B cell (primary cell): ENCODE measurements at regions of chr7 and their contacts with region 1.

Region 1: GRCh38 chr7:3042861-3043489 is 692 bp downstream of the CARD11 start:
- DNase-seq: peak; percentile 82
- ATAC-seq: peak; percentile 69
- H3K4me3 ChIP-seq: peak overlapping the region; percentile 30 to 90 (median 74)
- H3K4me3 Mint-ChIP-seq: peak overlapping the region; percentile 96
- H3K27ac ChIP-seq: peak overlapping the region; percentile 72 to 94
- H3K27ac Mint-ChIP-seq: peak overlapping the region; percentile 94
- H3K4me1 ChIP-seq: peaks cover 48 to 56% of the 10 kb centered on the region in 2 donors
- H3K4me1 Mint-ChIP-seq: peaks cover 55% of the 10 kb centered on the region
- H3K27me3 ChIP-seq: no peaks in the 10 kb centered on the region
- H3K27me3 Mint-ChIP-seq: no peaks in the 10 kb centered on the region
- CTCF ChIP-seq: no peak

Region 2: DNA sequence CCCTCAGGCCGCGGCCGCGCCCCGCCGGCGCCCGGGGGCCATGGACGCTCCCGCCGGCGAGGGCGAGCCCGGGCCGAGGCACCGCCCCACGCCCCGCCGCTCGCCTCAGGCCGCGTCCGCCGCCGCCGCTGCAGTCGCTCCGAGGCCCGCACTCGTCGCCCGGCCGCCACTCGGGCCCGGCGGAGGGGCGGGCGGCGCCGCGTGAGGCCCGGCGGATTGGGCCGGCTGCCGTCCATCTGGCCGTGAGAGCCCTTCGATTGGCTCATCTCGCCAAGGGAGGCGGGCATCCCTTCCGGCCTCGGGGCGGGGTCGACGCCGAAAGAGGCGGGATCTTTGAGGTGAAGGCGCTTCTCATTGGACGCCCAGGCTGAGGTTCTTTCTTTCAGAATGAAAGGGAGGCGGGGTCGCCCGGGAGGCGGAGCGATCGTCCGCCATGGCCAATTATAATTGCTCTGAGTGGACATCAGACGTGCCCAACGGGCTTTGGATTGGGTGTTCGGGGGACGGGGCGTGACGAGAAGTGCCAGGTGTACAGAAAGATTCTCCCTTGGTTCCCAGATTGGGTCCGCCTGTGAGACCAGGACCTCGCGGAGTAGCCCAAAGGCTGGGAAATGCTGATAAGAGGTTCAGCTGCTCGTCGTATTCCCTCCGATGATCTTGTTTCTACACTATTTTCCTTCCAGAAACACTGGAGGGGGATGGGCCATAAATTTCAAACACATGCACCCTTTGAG is 198.6 kb before region 1 on chr7 and contains the start of gene GNA12:
- CTCF ChIA-PET with region 1: no interaction called
- POLR2A ChIA-PET with region 1: no interaction called
- intact Hi-C with region 1: loop called (anchors 2 kb)
- DNase-seq: peak; percentile 98
- ATAC-seq: peak; percentile 93
- H3K4me3 ChIP-seq: peak within 1 kb of the TSS; percentile 50 to 70 (median 65)
- H3K4me3 Mint-ChIP-seq: peak within 1 kb of the TSS; percentile 95
- H3K27ac ChIP-seq: peak within 1 kb of the TSS in 1 of 2 donors; percentile 53
- H3K27ac Mint-ChIP-seq: peak within 1 kb of the TSS; percentile 80
- H3K4me1 ChIP-seq: peaks cover 34 to 45% of the 10 kb centered on the region in 2 donors
- H3K4me1 Mint-ChIP-seq: peaks cover 51% of the 10 kb centered on the region
- H3K27me3 ChIP-seq: no peaks in the 10 kb centered on the region
- H3K27me3 Mint-ChIP-seq: no peaks in the 10 kb centered on the region
- CTCF ChIP-seq: no peak
- total RNA-seq, gene GNA12: 110 and 114 TPM in 2 replicates

Region 3: GRCh38 chr7:2954433-2954853 is 88.5 kb before region 1 on chr7:
- CTCF ChIA-PET with region 1: interaction called, 5 read pairs
- POLR2A ChIA-PET with region 1: no interaction called
- intact Hi-C with region 1: loop called (anchors 5 kb)
- DNase-seq: no peak
- ATAC-seq: peak; percentile 49
- H3K4me3 ChIP-seq: no peak overlapping the region
- H3K4me3 Mint-ChIP-seq: peak overlapping the region; percentile 26
- H3K27ac ChIP-seq: peak overlapping the region in 1 of 2 donors; percentile 63
- H3K27ac Mint-ChIP-seq: peak overlapping the region; percentile 74
- H3K4me1 ChIP-seq: peaks cover 37% of the 10 kb centered on the region in 2 donors
- H3K4me1 Mint-ChIP-seq: peaks cover 59% of the 10 kb centered on the region
- H3K27me3 ChIP-seq: no peaks in the 10 kb centered on the region
- H3K27me3 Mint-ChIP-seq: no peaks in the 10 kb centered on the region
- CTCF ChIP-seq: no peak

Region 4: GRCh38 chr7:3065724-3066143 is 22.8 kb after region 1 on chr7:
- CTCF ChIA-PET with region 1: interaction called, 11 read pairs
- POLR2A ChIA-PET with region 1: interaction called, 5 read pairs
- intact Hi-C with region 1: loop called (anchors 2 kb)
- DNase-seq: peak; percentile 82
- ATAC-seq: peak; percentile 39
- H3K4me3 ChIP-seq: no peak overlapping the region
- H3K4me3 Mint-ChIP-seq: peak overlapping the region; percentile 47
- H3K27ac ChIP-seq: peak overlapping the region in 1 of 2 donors; percentile 15
- H3K27ac Mint-ChIP-seq: peak overlapping the region; percentile 83
- H3K4me1 ChIP-seq: peaks cover 57 to 62% of the 10 kb centered on the region in 2 donors
- H3K4me1 Mint-ChIP-seq: peaks cover 69% of the 10 kb centered on the region
- H3K27me3 ChIP-seq: no peaks in the 10 kb centered on the region
- H3K27me3 Mint-ChIP-seq: no peaks in the 10 kb centered on the region
- CTCF ChIP-seq: peak; percentile 74

Region 5: GRCh38 chr7:3197567-3198213 is 154.7 kb after region 1 on chr7:
- CTCF ChIA-PET with region 1: no interaction called
- POLR2A ChIA-PET with region 1: interaction called, 15 read pairs
- intact Hi-C with region 1: no loop called
- DNase-seq: no peak
- ATAC-seq: no peak
- H3K4me3 ChIP-seq: no peak overlapping the region
- H3K4me3 Mint-ChIP-seq: no peak overlapping the region
- H3K27ac ChIP-seq: no peak overlapping the region
- H3K27ac Mint-ChIP-seq: no peak overlapping the region
- H3K4me1 ChIP-seq: no peaks in the 10 kb centered on the region
- H3K4me1 Mint-ChIP-seq: peaks cover 4% of the 10 kb centered on the region
- H3K27me3 ChIP-seq: peaks cover 0 to 3% (median 0%) of the 10 kb centered on the region in 4 experiments
- H3K27me3 Mint-ChIP-seq: peaks cover 5% of the 10 kb centered on the region
- CTCF ChIP-seq: no peak